ENCODE measurements at regions of chr18 and their contacts with region 1.

Region 1: DNA sequence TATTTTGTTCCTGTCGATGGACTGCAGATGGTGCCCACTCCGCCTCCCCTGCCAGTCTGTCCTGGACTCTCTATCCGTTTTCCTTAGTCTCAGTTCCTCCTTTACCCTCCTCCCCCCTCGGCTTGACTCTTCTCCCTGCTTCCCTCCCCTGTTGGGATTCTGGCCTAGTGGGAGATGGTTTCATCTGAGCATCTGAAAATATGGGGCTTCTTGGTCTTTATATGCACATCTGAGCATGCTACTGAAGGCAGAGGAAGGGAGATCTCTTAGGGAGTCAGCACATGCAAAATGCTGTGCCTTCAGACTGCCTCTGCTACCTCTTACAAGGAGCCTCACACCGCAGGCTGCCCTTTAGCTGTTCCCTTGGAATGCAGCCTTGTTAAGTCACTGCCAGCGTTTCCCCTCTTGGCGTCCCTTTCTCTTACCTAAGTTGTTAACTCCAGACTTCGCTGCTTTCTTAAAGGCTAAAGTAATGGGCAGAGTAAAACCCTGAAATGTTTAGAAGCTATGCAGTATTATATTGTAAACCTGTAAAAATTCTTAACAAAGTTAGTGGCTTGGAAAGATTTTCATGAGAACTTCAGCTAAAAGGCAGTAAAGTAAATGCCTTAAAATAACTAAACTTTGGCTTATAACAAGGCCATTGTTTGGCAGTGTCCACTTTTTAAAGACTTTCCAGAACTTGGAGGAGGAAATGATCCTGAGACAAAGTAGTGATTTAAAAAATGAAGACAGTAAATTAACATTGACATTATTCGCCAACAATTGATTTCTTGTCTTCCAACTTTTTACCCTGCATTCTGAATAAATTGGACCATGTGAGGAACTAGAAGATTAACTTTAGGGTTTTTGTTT is 49.8 kb downstream of the LDLRAD4 start:
- DNase-seq: no peak
- ATAC-seq: no peak
- H3K4me3 ChIP-seq: no peak overlapping the region
- H3K27ac ChIP-seq: peak overlapping the region in 1 of 2 donors; percentile 83
- H3K4me1 ChIP-seq: peaks cover 0 to 9% of the 10 kb centered on the region in 2 donors
- H3K27me3 ChIP-seq: no peaks in the 10 kb centered on the region

Region 2: GRCh38 chr18:12271376-12272235 is 996.8 kb before region 1 on chr18:
- intact Hi-C with region 1: loop called in 1 of 2 experiments (anchors 10 kb)
- DNase-seq: peak; percentile 78 to 93
- ATAC-seq: peak; percentile 91
- H3K4me3 ChIP-seq: peak overlapping the region in 1 of 2 donors; percentile 14
- H3K27ac ChIP-seq: peak overlapping the region in 1 of 2 donors; percentile 13
- H3K4me1 ChIP-seq: no peaks in the 10 kb centered on the region
- H3K27me3 ChIP-seq: no peaks in the 10 kb centered on the region

Region 3: GRCh38 chr18:13019301-13019700 is 249.1 kb before region 1 on chr18:
- intact Hi-C with region 1: no loop called
- DNase-seq: no peak
- ATAC-seq: no peak
- H3K4me3 ChIP-seq: no peak overlapping the region
- H3K27ac ChIP-seq: no peak overlapping the region
- H3K4me1 ChIP-seq: no peaks in the 10 kb centered on the region
- H3K27me3 ChIP-seq: no peaks in the 10 kb centered on the region

Region 4: GRCh38 chr18:13221869-13222855 is 46.2 kb before region 1 on chr18:
- intact Hi-C with region 1: loop called (anchors 5 kb)
- DNase-seq: peak; percentile 88 to 89
- ATAC-seq: peak; percentile 79
- H3K4me3 ChIP-seq: no peak overlapping the region
- H3K27ac ChIP-seq: peak overlapping the region; percentile 30 to 32
- H3K4me1 ChIP-seq: no peaks in the 10 kb centered on the region
- H3K27me3 ChIP-seq: no peaks in the 10 kb centered on the region

Region 5: DNA sequence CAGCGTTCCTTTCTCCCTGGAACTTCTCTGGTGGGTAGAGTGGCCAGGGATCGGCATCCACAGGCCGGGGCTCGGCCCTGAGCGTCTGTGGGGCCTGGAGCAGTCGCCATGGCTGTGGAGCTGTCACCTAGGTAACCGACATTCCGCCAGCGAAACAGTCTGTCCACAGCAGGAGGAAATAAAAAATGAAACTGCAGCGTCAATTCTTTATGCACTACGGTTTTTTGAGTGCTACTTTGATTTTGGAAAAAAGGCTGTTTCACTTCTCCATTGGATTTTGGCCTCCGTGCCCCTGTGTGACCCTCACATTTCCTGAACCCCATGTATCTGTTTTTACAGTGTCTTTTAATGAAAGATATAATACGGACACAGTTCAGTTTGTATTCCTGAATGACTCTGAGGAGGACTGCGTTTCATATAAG is 113.6 kb after region 1 on chr18:
- intact Hi-C with region 1: loop called (anchors 2 to 5 kb)
- DNase-seq: peak; percentile 91
- ATAC-seq: peak; percentile 93
- H3K4me3 ChIP-seq: no peak overlapping the region
- H3K27ac ChIP-seq: peak overlapping the region; percentile 78 to 86
- H3K4me1 ChIP-seq: peaks cover 0 to 9% of the 10 kb centered on the region in 2 donors
- H3K27me3 ChIP-seq: no peaks in the 10 kb centered on the region

Region 6: DNA sequence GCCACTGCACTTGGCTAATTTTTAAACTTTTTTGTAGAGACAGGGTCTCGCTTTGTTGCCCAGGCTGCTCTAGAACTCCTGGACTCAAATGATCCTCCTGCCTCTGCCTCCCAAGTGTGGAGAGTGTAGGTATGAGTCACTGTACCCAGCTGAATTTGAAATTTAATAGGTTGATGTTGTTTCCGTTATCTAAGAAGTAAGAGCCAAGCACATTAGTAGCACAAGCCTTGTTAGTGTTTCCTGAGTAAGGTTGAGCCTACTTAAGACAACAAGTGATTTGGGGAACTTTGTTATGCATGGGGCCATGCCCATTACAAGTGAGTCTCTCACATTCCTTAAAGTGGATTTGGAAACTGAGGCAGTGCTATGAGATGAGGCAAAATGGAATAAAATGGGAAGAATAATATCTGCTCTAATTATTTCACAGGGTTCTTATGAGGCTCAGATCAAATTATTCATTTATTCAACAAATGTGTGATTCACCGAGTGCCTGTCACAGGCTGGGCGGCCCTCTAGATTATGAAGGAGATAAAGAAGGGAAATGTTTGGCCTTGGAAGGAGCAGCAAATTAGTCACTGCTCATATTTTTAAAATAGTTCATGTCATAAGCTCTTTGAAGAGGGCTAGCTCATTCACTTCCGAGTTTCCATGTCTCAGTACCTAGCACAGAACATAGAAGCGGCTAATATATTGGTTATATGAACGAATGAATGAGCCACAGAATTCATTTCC is 167.4 kb after region 1 on chr18:
- intact Hi-C with region 1: loop called in 1 of 2 experiments (anchors 5 kb)
- DNase-seq: peak; percentile 75 to 87
- ATAC-seq: peak; percentile 82
- H3K4me3 ChIP-seq: no peak overlapping the region
- H3K27ac ChIP-seq: peak overlapping the region; percentile 8 to 97
- H3K4me1 ChIP-seq: peaks cover 3 to 8% of the 10 kb centered on the region in 2 donors
- H3K27me3 ChIP-seq: no peaks in the 10 kb centered on the region

Region 7: DNA sequence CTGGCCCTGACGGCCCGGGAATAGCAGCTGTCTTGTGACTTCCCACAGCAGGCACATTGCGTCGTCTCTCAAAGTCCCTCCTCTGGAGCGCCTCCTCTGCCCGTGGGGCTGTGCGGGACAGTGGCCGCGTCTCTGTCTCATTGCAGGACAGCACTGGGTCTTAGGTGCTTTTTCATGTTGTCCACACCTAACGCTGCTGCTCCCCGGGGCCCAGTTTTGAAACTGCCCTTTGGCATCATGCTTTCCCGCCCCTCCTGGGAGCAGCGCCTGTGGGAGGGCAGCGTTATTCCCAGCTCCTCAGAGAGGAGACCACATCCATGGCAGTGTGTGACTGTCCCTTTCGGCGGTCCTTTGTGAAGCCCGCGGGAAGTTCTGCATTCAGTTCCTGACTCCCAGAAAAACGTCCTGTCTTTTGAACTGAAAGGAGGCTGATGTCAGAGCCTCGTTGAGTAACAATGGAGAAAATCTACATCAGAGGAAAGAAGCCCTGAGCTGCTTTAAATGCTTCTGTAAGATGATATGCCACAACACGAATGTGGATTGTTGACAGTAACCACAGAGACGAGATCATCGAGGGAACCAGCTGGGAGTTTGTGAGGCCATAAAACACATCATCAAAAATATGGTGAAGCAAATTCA is 232.0 kb after region 1 on chr18:
- intact Hi-C with region 1: loop called in 1 of 2 experiments (anchors 10 kb)
- DNase-seq: no peak
- ATAC-seq: peak; percentile 68
- H3K4me3 ChIP-seq: no peak overlapping the region
- H3K27ac ChIP-seq: peak overlapping the region; percentile 53 to 96
- H3K4me1 ChIP-seq: peaks cover 3 to 5% of the 10 kb centered on the region in 2 donors
- H3K27me3 ChIP-seq: no peaks in the 10 kb centered on the region

Measured in aorta (tissue), 5 donors.